ENCODE measurements at regions of chr19 and their contacts with region 1.

Region 1: DNA sequence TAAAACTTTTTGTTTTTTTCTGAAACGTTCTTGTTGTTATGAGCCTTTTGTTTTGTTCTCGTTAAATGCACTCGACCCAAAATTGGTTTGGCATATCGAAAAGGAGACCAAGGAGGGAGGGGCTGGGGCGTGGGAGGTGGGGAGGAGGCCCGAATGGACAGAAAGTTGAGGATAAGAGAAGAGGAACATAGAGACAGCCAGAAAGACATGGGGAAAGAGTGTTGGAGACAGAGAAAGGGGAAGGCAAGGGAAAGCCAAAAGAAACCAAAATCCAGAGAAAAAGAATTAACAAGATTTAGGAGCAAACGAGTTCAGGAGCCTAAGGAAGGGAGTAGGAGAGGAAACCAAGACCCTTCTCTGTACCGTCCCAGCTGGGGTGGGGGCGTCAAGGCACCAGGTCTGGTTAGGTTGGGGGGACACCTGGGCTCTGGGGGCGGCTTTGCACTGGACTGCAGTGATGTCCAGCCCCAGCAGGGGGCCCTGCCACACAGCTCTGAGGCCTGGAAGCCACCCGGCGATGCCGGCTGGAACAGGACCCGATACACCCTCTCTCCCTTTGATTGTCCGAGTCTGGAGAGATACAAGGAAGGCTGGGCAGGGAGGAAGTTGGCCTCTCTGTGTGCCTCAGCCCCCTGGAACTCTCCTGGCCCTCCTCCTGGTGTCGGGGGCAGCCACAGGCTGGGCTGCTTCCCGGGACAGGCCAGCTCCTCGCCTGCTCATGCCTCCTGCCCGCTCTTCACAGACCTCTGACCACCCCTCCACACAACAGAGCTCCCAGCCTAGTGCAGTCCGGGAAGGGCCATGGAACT is 11.6 kb upstream of the ASF1B start:
- DNase-seq: peak; percentile 49 to 69 (median 66)
- H3K4me3 ChIP-seq: peak overlapping the region in 1 of 7 experiments; percentile 52
- H3K27ac ChIP-seq: no peak overlapping the region
- H3K4me1 ChIP-seq: peaks cover 0 to 31% (median 28%) of the 10 kb centered on the region in 4 experiments
- H3K27me3 ChIP-seq: no peaks in the 10 kb centered on the region

Region 2: DNA sequence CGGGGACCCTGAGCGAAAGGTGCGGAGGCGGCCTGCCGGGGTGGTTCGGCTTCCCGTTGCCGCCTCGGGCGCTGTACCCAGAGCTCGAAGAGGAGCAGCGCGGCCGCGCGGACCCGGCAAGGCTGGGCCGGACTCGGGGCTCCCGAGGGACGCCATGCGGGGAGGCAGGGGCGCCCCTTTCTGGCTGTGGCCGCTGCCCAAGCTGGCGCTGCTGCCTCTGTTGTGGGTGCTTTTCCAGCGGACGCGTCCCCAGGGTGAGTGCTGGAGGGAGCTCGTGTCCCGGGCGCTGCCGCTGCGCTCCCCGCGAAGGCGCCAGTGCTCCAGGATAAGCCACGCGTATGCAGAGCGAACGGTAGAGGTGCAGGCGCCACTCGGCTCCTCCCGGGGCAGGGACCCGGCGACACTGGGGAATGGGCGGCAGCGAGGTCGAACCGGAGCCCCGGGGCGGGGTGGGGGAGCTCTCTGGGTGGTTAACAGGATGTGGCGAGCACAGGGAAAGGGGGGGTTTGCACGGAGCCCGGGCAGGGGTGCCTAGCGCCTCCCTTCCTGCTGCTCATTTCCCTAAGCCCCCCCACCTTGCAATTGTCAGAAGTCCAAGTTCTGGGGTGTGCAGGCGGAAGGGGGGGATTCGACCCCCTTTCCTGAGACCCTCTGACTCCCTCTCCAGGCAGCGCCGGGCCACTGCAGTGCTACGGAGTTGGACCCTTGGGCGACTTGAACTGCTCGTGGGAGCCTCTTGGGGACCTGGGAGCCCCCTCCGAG is 116.1 kb before region 1 on chr19 and contains the start of gene IL27RA:
- CTCF ChIA-PET with region 1: no interaction called
- POLR2A ChIA-PET with region 1: no interaction called
- DNase-seq: peak; percentile 84 to 93 (median 92)
- H3K4me3 ChIP-seq: peak within 1 kb of the TSS; percentile 67 to 89 (median 84)
- H3K27ac ChIP-seq: peak within 1 kb of the TSS; percentile 64 to 85
- H3K4me1 ChIP-seq: peaks cover 0 to 14% (median 9%) of the 10 kb centered on the region in 4 experiments
- H3K27me3 ChIP-seq: no peaks in the 10 kb centered on the region

Region 3: DNA sequence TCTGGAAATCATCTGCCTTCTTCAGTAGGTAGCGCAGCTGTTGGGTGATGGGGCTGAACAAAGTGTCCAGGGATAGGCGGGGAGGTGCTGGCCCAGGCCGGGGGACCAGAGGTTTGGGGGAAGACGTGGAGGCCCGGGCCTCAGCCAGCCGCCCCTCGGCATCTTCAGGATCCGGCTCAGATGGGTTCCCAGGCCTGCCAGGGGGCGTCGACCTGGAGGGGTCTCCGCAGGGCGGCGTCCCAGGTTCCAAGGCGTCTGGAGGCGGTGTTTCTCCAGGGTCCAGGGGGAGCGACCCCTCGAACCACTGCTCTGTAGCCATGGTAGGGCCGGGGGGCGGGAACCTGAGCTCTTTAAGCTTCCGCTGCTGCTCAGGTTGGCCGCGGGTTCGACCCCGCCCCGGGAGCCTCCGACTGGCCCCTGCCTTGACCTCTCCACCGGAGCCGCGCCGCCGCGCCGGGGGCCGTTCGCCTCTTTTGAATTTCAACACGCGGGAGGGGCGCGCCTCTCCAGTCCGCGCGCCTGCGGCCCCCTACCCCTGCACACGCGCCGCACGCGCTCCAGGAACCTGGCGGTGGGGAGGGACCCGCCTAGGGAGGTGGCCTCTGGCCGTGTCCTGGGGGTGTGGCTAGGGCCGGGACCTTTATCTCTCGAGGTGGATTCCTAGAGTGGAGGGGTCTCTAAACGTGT is 62.5 kb before region 1 on chr19 and contains the start of gene C19orf67:
- CTCF ChIA-PET with region 1: no interaction called
- POLR2A ChIA-PET with region 1: no interaction called
- DNase-seq: no peak
- H3K4me3 ChIP-seq: no peak within 1 kb of the TSS
- H3K27ac ChIP-seq: no peak within 1 kb of the TSS
- H3K4me1 ChIP-seq: peaks cover 2 to 23% (median 19%) of the 10 kb centered on the region in 4 experiments
- H3K27me3 ChIP-seq: no peaks in the 10 kb centered on the region

Region 4: DNA sequence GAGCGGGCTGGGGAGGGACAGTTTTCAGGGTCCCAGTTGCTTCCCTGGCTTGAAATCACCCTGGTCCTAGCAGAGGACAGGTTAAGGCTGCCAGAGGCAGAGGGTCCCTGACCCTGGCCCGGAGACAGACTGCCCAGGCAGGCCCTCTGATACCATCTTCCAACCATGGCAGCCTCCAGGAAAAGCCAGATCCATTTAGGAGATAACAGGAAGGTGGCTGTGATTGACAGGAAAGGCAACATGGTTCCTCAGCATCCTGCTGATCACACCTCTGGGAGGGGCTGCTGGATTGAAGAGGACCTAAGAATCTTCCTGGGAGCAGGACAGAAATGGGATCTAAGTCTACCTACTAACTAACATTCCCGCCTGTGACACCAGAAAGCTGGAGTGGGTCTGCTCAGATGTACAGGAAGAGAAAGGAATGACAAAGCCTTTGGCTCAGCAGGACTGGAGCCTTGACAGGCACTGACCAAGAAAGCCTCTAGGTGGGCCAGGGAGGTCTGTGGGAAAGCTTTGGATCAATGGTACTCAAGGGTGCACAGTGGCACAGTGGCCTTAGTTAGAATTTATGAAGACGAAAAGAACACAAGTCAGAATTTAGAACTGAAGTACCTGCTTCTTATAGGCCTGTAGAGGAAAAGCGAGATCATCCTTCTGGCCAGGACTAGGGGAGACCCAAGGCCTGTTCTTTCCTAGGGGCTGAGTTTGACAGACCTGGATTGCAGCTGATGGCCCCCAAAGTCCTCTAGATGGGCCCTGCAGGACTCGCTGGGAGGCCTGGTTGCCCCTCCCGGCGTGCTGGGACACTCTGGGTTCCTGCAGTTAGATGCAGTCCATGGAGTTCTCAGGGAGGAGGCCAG is 28.1 kb before region 1 on chr19:
- CTCF ChIA-PET with region 1: no interaction called
- POLR2A ChIA-PET with region 1: no interaction called
- DNase-seq: no peak
- H3K4me3 ChIP-seq: no peak overlapping the region
- H3K27ac ChIP-seq: peak overlapping the region in 1 of 2 experiments; percentile 7
- H3K4me1 ChIP-seq: peaks cover 7 to 44% (median 29%) of the 10 kb centered on the region in 4 experiments
- H3K27me3 ChIP-seq: no peaks in the 10 kb centered on the region

Region 5: DNA sequence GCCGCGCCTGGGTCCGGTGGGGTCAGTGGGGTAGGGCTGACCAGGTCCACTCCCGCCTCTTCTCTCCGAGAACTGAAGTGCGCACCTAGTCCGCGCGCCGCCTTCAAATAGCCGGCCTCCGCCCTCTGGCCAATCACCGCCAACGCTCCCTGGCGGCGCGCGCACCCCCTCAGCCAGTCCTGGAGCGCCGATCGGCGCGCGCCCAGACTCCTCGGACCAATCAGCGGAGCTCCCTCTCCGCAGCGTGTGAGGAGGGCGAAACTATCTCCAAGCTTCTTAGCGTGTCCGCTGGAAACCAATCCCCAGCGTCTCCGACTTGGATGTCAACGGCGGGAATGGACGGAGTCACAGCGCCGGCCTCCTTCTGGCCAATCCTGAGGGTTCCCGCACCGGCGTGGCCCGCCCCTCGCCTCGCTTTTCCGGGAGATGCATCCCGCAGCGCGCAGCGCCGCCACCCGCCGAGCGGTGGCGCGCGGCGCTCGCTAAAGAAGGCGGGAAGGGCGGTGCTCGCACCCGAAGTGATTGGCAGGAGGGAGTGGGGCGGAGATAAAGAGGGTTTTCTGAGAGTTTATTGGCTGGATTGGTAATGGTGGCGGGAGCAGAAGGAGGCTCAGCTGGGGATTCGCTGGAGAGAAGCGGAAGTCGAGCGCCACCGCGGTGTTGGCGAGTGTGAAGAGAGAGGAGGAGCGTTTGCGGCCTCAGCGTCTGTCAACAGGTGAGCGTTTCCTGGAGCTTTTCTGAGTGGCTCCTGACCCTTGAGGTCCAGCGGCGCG is 11.3 kb before region 1 on chr19 and contains the start of gene ASF1B:
- CTCF ChIA-PET with region 1: interaction called, 11 read pairs
- POLR2A ChIA-PET with region 1: interaction called, 3 read pairs
- DNase-seq: peak; percentile 100
- H3K4me3 ChIP-seq: peak within 1 kb of the TSS; percentile 62 to 90 (median 82)
- H3K27ac ChIP-seq: peak within 1 kb of the TSS; percentile 84 to 86
- H3K4me1 ChIP-seq: peaks cover 2 to 38% (median 24%) of the 10 kb centered on the region in 4 experiments
- H3K27me3 ChIP-seq: no peaks in the 10 kb centered on the region

Region 6: GRCh38 chr19:14167576-14168138 is 19.7 kb after region 1 on chr19:
- CTCF ChIA-PET with region 1: interaction called, 13 read pairs
- POLR2A ChIA-PET with region 1: interaction called, 5 read pairs
- DNase-seq: peak; percentile 30 to 76 (median 69)
- H3K4me3 ChIP-seq: peak overlapping the region in 5 of 7 experiments; percentile 7 to 69 (median 48)
- H3K27ac ChIP-seq: peak overlapping the region in 1 of 2 experiments; percentile 70
- H3K4me1 ChIP-seq: peaks cover 0 to 36% (median 32%) of the 10 kb centered on the region in 4 experiments
- H3K27me3 ChIP-seq: no peaks in the 10 kb centered on the region